ENCODE measurements at regions of chr4 and their contacts with region 1.

Region 1: GRCh38 chr4:78166637-78167036 is 109.5 kb downstream of the FRAS1 start:
- DNase-seq: no peak
- ATAC-seq: peak; percentile 79
- H3K4me3 ChIP-seq: no peak overlapping the region
- H3K27ac ChIP-seq: no peak overlapping the region
- H3K4me1 ChIP-seq: no peaks in the 10 kb centered on the region
- H3K27me3 ChIP-seq: no peaks in the 10 kb centered on the region
- CTCF ChIP-seq: no peak
- EP300 ChIP-seq: no peak
- POLR2A ChIP-seq: no peak
- RAD21 ChIP-seq: no peak

Region 2: DNA sequence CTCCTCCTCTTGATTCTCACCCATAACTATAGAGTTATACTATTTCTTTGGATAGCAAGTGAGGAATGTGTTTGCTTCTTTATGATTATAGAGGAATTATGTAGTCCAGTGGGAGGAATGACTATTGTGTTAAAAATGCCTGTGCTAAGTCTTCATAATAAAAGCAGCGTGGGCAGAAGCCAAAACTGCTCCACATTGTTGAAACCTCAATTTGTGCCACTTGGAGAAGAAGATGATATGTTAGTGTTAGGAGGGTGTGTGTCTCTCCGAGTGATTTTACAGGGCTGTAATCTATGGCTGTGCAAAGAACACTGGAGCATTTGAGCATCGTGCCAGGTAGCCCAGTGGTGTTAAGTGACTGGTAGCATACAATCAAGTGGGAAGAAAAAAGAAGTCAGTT is 35.2 kb before region 1 on chr4:
- CTCF ChIA-PET with region 1: interaction called, 5 read pairs
- POLR2A ChIA-PET with region 1: no interaction called
- RAD21 ChIA-PET with region 1: interaction called, 9 read pairs
- SMC1A ChIA-PET with region 1: interaction called, 12 read pairs
- in situ Hi-C with region 1: no loop called
- intact Hi-C with region 1: no loop called
- DNase-seq: no peak
- ATAC-seq: no peak
- H3K4me3 ChIP-seq: no peak overlapping the region
- H3K27ac ChIP-seq: no peak overlapping the region
- H3K4me1 ChIP-seq: no peaks in the 10 kb centered on the region
- H3K27me3 ChIP-seq: no peaks in the 10 kb centered on the region; a peak in 1 of 4 replicates
- CTCF ChIP-seq: no peak
- EP300 ChIP-seq: no peak
- POLR2A ChIP-seq: no peak
- RAD21 ChIP-seq: no peak

Region 3: DNA sequence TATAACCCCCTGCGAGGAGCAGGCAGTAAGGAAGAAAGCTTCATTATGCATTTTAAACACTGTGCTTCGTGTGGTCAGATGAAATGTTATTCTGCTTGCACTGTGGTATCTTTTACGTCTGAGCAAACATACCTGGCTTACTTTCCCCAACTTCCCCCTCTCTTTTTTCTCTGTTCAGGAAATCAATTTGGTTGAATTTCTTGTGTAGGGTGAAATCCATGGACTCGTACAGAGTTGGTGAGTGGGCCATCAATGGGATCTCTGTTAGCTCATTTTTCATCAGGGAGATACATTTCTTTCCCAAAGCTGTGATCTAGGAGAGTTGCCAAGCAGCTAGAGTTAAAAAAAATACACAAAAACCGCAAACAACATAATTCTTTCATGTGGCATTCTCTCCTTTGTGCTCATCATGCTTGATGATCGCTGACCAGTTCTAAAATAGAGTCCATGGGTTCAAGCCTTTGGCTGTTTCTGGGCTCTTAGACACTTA is 11.0 kb before region 1 on chr4:
- CTCF ChIA-PET with region 1: interaction called, 9 read pairs
- POLR2A ChIA-PET with region 1: interaction called, 3 read pairs
- RAD21 ChIA-PET with region 1: interaction called, 3 read pairs
- SMC1A ChIA-PET with region 1: interaction called, 11 read pairs
- in situ Hi-C with region 1: no loop called
- intact Hi-C with region 1: no loop called
- DNase-seq: no peak
- ATAC-seq: peak; percentile 62
- H3K4me3 ChIP-seq: no peak overlapping the region
- H3K27ac ChIP-seq: no peak overlapping the region
- H3K4me1 ChIP-seq: no peaks in the 10 kb centered on the region
- H3K27me3 ChIP-seq: peaks cover 0 to 4% of the 10 kb centered on the region in 2 experiments; a peak in 1 of 4 replicates
- CTCF ChIP-seq: no peak
- EP300 ChIP-seq: no peak
- POLR2A ChIP-seq: no peak
- RAD21 ChIP-seq: no peak

Region 4: GRCh38 chr4:78186597-78187543 is 20.2 kb after region 1 on chr4:
- CTCF ChIA-PET with region 1: interaction called, 29 read pairs
- POLR2A ChIA-PET with region 1: interaction called, 9 read pairs
- RAD21 ChIA-PET with region 1: interaction called, 40 read pairs
- SMC1A ChIA-PET with region 1: interaction called, 76 read pairs
- in situ Hi-C with region 1: no loop called
- intact Hi-C with region 1: no loop called
- DNase-seq: no peak
- ATAC-seq: peak; percentile 78
- H3K4me3 ChIP-seq: no peak overlapping the region
- H3K27ac ChIP-seq: no peak overlapping the region
- H3K4me1 ChIP-seq: no peaks in the 10 kb centered on the region
- H3K27me3 ChIP-seq: no peaks in the 10 kb centered on the region
- CTCF ChIP-seq: no peak
- EP300 ChIP-seq: no peak
- POLR2A ChIP-seq: no peak
- RAD21 ChIP-seq: no peak

Measured in GM12878 (cell line).